ENCODE measurements at regions of chr3 and their contacts with region 1.

Region 1: DNA sequence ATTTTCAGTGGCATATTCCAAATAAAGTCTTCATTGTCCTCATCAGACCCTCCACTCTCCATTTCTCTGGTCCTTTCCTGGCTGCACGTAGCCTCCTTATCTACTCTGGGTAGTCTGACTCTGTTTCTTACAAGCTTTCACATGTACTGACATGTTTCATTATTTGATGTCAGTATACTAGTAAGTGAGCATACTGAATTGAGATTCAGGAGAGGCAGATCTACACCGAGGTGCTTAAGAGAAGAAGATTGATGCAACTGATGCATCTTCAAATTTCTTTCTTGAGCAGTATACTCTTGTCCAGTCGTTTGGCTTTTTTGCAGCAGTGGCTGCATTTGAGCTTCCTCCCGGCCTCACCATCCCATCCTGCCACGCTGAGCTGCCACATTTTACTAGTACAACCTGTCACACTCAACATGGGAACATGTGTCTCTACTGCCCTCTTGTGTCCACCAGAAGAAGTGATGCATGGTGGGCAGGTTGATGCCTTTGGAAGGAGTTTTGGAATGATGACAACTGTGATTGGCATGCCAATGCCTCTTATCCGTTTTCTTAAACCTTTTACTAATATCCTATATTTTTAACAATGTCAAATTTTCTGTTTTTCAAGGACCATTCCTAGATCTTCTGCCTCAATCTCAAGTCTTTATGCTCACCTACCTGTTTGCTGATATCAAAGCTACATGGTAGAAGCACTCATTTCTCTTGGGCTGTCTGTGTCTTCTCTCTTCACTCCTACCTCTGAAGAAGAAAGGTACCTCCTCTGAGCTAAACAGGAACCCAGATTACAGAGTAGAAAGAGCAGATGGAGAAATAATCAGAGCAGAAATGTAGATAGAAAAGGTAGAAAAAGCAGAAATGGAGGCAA is 38.7 kb downstream of the GUCA1C start:
- DNase-seq: peak; percentile 44
- H3K4me3 ChIP-seq: no peak overlapping the region
- H3K27ac ChIP-seq: no peak overlapping the region
- H3K4me1 ChIP-seq: no peaks in the 10 kb centered on the region
- H3K27me3 ChIP-seq: no peaks in the 10 kb centered on the region
- CTCF ChIP-seq: peak; percentile 68 to 84 (median 76)
- EP300 ChIP-seq: no peak
- POLR2A ChIP-seq: no peak

Region 2: GRCh38 chr3:108489771-108490170 is 425.2 kb before region 1 on chr3:
- in situ Hi-C with region 1: loop called in 2 of 4 experiments (anchors 10 kb)
- intact Hi-C with region 1: no loop called
- DNase-seq: no peak
- H3K4me3 ChIP-seq: no peak overlapping the region
- H3K27ac ChIP-seq: no peak overlapping the region
- H3K4me1 ChIP-seq: peaks cover 0 to 8% (median 0%) of the 10 kb centered on the region in 4 donors
- H3K27me3 ChIP-seq: no peaks in the 10 kb centered on the region
- CTCF ChIP-seq: peak; percentile 60 to 74 (median 67)
- EP300 ChIP-seq: no peak
- POLR2A ChIP-seq: no peak

Region 3: DNA sequence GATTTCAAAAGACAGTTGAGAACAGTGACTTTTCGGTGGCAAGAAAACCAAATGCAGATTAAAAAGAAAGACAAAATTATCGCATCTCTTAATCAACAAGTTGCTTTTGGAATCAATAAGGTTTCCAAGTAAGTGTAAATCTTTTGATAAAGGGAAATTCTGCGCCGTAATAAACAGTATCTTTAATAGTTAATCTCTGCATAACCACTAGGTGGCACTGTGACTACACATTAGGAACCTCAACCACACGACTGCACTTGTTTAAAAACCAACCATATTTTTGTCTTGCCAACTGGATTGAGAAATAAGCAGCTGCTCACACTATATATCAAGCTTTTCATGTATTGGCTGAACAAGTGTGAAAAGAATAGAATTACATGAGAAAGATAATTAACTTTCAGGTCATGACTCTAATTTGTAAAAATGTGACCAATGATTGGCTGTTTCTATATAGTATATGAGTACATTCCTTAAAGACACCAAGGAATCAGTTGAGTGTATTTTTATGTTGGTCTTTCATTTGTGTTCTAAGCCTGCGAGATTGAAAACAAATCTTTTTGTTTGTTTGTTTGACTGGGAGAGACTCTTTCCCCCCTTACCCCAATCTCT is 252.8 kb before region 1 on chr3:
- in situ Hi-C with region 1: loop called (anchors 5 to 10 kb)
- intact Hi-C with region 1: loop called (anchors 2 kb)
- DNase-seq: no peak
- H3K4me3 ChIP-seq: no peak overlapping the region
- H3K27ac ChIP-seq: no peak overlapping the region
- H3K4me1 ChIP-seq: no peaks in the 10 kb centered on the region
- H3K27me3 ChIP-seq: no peaks in the 10 kb centered on the region
- CTCF ChIP-seq: peak; percentile 76 to 85 (median 79)
- EP300 ChIP-seq: no peak
- POLR2A ChIP-seq: no peak